ENCODE measurements at regions of chr18 and their contacts with region 1.

Region 1: GRCh38 chr18:63823518-63824219 is 48.5 kb downstream of the SERPINB7 start:
- DNase-seq: peak; percentile 56
- ATAC-seq: no peak
- H3K4me3 Mint-ChIP-seq: no peak overlapping the region
- H3K27ac Mint-ChIP-seq: no peak overlapping the region
- H3K4me1 Mint-ChIP-seq: no peaks in the 10 kb centered on the region
- H3K27me3 Mint-ChIP-seq: peaks cover 6% of the 10 kb centered on the region
- CTCF ChIP-seq: peak; percentile 59

Region 2: DNA sequence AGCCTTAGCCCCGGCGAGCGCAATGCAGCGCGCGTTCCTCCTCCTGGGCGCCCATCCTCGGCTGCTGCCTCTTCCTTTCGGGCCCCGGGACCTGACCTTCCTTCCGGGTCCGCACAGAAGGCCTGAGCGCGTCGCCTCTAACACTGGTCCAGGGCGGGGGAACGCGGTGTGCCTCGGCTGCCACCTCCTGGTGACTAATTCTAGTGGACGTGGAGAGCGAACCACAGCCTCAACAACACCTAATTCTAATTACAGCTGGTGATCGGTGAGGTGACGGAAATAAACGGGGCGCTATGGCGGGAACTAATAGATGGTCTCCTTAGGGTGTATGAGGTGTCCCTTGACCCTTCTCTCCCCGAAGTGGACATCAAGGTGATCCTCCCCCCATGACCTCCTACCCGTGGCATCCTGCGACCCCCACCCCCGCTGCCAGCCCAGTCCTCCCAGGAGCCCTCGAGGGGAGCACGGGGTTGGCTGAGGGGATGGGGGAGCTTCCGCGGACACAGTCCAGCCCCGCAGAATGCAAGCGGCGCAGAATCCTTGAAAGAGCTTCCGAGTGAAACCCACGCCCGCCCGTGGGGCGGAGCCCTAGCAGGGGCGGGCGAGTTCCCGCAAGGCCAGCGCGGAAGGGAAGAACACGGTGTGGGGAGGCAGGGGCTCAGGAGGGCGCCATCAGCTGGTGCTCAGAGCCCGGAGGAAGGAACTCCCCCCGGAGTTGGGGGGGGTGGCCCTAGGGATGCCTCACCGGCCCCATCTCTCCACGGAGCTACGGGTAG is 112.7 kb after region 1 on chr18:
- CTCF ChIA-PET with region 1: interaction called, 11 read pairs
- POLR2A ChIA-PET with region 1: no interaction called
- intact Hi-C with region 1: no loop called
- DNase-seq: peak; percentile 78
- ATAC-seq: peak; percentile 97
- H3K4me3 Mint-ChIP-seq: peak overlapping the region; percentile 56
- H3K27ac Mint-ChIP-seq: no peak overlapping the region
- H3K4me1 Mint-ChIP-seq: no peaks in the 10 kb centered on the region
- H3K27me3 Mint-ChIP-seq: peaks cover 13% of the 10 kb centered on the region
- CTCF ChIP-seq: peak; percentile 51